AG04449 (cell line): ENCODE measurements at regions of chr17 and their contacts with region 1.

Region 1: DNA sequence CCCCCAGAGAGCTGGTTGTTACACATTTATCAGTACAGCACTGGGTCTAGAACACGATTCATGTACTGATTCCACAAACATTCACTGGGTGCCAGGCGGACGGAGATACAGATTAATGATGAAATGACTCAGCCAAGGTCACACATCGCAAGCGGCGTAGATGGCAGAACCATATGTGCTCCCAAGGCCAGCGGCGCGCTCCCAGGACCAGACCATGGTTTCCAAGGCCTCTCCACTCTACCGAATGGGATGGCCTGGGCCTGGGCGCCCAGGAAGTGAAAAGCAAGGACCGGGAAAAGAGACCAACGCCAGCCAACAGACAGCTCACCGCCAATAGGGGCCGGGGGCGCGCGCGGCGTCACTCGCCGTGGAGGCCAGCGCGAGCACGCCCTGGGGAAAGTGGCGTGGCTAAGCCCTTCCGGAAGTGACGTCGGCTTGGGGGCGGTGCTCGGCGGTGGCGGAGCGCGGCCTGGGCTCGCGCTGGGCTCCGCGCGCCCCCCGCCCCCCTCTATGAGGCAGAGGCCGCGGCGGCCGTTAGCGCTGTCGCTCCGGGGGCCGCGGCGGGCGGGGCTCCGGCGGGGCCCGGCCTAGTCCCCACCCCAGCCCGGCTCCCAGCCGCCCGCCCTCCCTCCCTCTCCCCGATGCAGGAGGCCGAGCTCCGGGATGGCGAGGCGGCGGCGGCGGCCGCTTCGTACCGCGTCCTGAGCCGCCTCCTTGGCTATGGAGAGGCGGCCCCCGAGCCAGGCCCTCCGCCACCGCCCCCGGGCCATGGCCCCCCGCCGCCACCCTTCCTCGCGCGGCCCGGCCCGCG is at the start of gene SOCS7:
- DNase-seq: peak; percentile 17
- H3K4me3 ChIP-seq: peak within 1 kb of the TSS; percentile 75
- CTCF ChIP-seq: no peak

Region 2: GRCh38 chr17:38322091-38322779 is 29.4 kb before region 1 on chr17:
- CTCF ChIA-PET with region 1: interaction called, 81 read pairs
- POLR2A ChIA-PET with region 1: no interaction called
- DNase-seq: no peak
- H3K4me3 ChIP-seq: no peak overlapping the region
- CTCF ChIP-seq: peak; percentile 77

Region 3: DNA sequence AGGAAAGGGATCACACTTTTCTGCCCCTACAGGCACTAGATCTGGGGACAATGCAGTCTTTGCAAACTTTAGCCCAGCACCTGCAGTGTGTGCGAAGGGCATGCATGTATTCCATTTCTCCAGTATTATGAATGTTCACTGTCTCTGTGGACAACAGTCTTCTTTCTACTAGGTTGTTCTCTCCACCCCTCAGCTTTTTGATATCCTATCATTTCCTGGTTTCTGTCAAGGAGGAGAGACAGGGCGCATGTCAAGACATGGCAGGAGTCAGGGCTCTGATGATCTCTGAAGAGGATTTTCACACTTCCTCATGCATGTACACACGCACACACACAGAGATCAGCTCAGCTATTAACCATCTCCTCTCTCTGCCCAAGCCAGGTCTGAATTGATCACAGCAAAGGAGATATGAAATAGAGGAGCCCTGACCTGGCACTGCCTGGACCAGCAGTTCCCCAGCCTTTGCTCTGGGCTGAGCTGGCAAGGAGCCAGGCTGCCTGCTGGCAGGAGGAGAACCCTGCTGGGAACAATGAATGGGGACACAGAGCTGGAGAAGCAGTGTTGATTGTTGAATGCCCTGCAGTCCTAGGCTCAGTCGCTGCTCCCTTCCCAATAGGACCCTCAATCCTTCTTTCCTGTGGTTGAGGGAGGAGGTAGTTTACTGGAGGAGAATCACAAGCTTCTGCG is 10.4 kb before region 1 on chr17:
- CTCF ChIA-PET with region 1: interaction called, 74 read pairs
- POLR2A ChIA-PET with region 1: interaction called, 3 read pairs
- DNase-seq: no peak
- H3K4me3 ChIP-seq: no peak overlapping the region
- CTCF ChIP-seq: no peak

Region 4: GRCh38 chr17:38403491-38403890 is 51.9 kb after region 1 on chr17:
- CTCF ChIA-PET with region 1: interaction called, 456 read pairs
- POLR2A ChIA-PET with region 1: interaction called, 3 read pairs
- DNase-seq: no peak
- H3K4me3 ChIP-seq: no peak overlapping the region
- CTCF ChIP-seq: no peak

Region 5: GRCh38 chr17:38421171-38421841 is 69.7 kb after region 1 on chr17:
- CTCF ChIA-PET with region 1: interaction called, 456 read pairs
- POLR2A ChIA-PET with region 1: interaction called, 3 read pairs
- DNase-seq: peak; percentile 78
- H3K4me3 ChIP-seq: peak overlapping the region; percentile 20
- CTCF ChIP-seq: no peak

Region 6: DNA sequence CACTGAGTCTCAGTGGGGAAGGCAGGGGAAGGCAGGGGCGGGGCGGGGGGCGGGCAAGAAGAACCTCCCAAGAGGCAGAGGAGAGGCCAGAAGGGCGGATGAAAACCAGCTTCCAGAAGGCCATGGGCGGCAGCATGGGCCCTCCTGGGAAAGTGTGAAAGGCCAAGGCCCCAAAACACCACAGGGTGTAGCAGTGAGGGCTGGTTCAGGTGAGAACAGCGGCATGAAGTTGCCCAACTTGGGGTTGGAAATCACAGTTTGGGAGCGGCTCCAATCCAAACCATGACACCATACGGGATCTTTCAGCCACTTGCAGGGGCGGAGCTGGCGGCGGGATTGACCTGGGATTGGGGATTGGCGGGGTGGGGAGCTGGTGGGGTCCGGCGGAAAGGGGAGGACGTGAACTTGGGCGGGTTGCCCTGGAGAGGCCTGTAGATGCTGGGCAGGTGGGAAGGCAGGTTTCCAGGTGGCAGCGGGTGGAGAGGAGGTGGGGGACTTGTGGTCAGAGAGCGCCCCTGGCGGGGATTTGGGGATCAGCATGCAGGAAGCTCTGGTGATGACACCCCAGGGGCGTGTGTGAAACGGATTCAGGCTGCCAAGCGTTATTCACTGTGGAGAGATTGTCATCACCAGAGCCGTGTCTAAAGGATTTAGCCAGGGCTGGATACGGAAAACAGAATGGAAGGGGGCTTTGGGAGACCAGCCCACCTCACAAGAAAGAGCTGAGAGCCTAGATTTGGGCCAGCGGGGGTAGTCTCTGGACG is 157.6 kb after region 1 on chr17:
- CTCF ChIA-PET with region 1: interaction called, 12 read pairs
- POLR2A ChIA-PET with region 1: interaction called, 4 read pairs
- DNase-seq: peak; percentile 66
- H3K4me3 ChIP-seq: no peak overlapping the region
- CTCF ChIP-seq: peak; percentile 89

Region 7: GRCh38 chr17:38667099-38667786 is 315.6 kb after region 1 on chr17:
- CTCF ChIA-PET with region 1: interaction called, 42 read pairs
- POLR2A ChIA-PET with region 1: no interaction called
- DNase-seq: no peak
- H3K4me3 ChIP-seq: no peak overlapping the region
- CTCF ChIP-seq: peak; percentile 98

Region 8: DNA sequence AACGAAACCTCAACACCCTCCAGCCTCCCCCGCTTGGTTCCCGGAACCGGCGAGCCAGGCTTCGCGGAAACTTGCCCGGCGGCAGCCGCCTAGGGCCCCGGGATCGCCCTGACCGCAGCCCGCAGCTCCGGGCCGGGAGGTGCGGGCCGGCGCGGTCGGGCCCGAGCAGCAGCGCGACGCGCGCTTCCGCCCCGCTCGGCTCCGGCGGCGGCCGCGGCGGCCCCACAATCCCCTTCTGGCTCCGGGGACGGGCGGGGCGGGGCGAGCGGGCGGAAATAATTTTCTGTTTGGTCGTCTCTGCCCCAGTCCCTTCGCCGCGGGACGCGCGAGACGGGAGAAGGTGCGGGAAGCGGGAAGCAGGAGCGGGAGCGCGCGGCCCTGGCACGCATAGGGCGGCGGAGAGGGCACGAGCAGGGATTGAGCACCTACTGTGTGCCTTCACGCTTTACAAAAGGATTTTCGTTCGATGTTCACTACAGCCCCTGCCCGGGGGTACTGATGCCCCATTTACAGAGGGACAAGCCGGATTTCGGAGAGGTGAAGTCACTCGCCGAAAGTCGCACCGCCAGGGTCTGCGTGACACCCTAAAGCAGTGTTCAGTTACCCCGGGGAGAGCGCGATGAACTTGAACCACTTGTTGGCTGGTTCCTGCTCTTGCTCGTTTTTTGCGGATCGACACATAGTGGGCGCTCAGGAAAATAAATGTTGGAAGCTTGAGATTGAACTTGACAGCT is 350.7 kb after region 1 on chr17:
- CTCF ChIA-PET with region 1: no interaction called
- POLR2A ChIA-PET with region 1: no interaction called
- DNase-seq: no peak
- H3K4me3 ChIP-seq: peak overlapping the region; percentile 76
- CTCF ChIP-seq: no peak

Region 9: DNA sequence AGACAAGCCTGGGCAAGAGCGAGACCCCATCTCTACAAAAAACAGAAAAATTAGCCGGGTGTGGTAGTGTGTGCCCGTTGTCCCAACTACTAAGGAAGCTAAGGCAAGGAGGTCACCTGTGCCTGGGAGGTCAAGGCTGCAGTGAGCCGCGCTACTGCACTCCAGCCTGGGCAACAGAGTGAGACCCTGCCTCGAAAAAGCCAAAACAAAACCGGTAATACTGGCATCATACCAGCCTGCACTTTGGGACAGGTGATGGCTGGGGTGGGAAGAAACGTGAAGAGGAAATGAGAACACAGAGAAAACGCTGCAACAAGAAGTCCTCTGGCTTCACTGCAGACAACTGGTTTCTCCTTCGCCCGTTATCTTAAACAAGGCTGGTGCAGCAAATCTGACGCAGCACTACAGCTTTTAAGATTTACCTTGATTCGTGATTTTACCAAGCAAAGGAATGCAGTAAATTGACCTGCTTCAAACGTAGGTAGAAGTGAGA is 1788.0 kb after region 1 on chr17:
- CTCF ChIA-PET with region 1: no interaction called
- POLR2A ChIA-PET with region 1: no interaction called
- DNase-seq: no peak
- H3K4me3 ChIP-seq: peak overlapping the region; percentile 57
- CTCF ChIP-seq: no peak